ENCODE measurements at regions of chr5 and their contacts with region 1.

Region 1: DNA sequence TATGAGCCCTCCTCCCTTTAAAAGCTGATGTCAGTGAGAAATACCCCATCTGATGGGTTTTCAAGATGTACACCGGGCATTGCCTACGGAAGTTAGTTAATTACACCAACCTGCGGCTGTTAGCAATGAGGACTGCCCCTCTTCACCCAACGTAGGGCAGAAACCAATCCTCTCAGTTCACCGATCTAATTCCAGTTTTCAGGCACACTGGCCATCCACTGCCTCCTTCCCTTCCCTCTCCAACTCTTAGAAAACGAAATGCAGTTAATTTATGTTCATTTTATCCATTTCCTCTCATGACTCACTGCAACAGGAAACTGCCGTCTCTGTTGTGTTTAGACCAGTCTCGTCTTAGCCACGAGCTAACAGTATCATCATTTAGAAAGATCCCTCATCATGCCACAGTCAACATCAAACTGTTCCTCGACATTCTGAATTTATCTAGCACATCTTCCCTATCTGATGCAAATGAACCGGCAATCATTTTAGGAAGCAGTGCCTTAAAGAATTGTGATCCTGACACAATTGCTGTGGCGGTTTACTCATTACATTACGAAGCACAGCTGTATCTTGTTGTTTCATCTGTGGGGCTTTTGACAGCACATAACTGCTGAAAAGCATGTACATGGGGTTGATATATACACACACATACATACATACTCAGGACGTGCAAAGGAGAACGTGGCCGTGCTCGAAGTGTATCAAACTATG is 168.6 kb downstream of the EFNA5 start:
- DNase-seq: no peak
- H3K4me3 ChIP-seq: no peak overlapping the region
- H3K27ac ChIP-seq: no peak overlapping the region
- H3K4me1 ChIP-seq: peaks cover 21% of the 10 kb centered on the region
- CTCF ChIP-seq: no peak

Region 2: GRCh38 chr5:106801554-106801953 is 700.6 kb before region 1 on chr5:
- CTCF ChIA-PET with region 1: no interaction called
- POLR2A ChIA-PET with region 1: no interaction called
- intact Hi-C with region 1: no loop called
- DNase-seq: no peak
- H3K4me3 ChIP-seq: no peak overlapping the region
- H3K27ac ChIP-seq: no peak overlapping the region
- H3K4me1 ChIP-seq: no peaks in the 10 kb centered on the region
- CTCF ChIP-seq: no peak

Region 3: DNA sequence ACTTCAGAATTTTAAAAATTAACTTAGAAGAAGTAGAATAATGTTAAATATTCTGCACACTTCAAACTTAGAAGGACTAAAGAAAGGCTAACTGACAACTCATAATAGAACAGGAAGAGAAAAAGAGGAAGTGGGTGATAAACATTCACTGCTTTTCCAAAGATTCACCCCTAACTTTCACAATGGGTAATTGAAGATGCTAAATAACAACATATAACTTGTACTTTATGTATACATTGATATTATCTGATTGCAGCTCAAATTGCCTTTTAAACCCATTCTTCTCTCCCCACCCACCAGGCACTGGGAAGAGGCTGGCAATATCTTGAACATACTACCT is 207.9 kb before region 1 on chr5:
- CTCF ChIA-PET with region 1: no interaction called
- POLR2A ChIA-PET with region 1: interaction called, 10 read pairs
- intact Hi-C with region 1: no loop called
- DNase-seq: peak; percentile 65
- H3K4me3 ChIP-seq: peak overlapping the region; percentile 2
- H3K27ac ChIP-seq: peak overlapping the region; percentile 49
- H3K4me1 ChIP-seq: peaks cover 38% of the 10 kb centered on the region
- CTCF ChIP-seq: no peak

Region 4: DNA sequence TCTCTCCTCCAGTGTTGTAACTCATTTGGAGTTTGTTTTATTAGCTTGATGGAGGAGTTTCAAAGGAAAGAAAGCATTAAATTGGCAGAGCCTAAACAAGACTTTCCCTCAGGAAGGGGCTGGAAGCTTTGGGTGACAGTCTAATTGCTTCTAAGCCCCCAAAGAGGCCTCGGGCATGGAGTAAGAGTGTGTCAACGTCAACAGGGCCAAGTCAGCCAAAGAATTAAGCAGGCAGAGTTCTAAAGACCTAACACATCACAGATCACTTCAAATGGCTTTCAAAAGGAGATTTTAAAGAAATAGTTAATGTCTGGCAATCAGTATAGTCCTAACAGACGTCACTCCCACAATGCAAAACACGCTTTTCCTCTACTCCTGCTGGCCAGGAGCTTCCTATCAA is 65.9 kb before region 1 on chr5:
- CTCF ChIA-PET with region 1: no interaction called
- POLR2A ChIA-PET with region 1: no interaction called
- intact Hi-C with region 1: no loop called
- DNase-seq: no peak
- H3K4me3 ChIP-seq: no peak overlapping the region
- H3K27ac ChIP-seq: no peak overlapping the region
- H3K4me1 ChIP-seq: peaks cover 33% of the 10 kb centered on the region
- CTCF ChIP-seq: no peak

Region 5: DNA sequence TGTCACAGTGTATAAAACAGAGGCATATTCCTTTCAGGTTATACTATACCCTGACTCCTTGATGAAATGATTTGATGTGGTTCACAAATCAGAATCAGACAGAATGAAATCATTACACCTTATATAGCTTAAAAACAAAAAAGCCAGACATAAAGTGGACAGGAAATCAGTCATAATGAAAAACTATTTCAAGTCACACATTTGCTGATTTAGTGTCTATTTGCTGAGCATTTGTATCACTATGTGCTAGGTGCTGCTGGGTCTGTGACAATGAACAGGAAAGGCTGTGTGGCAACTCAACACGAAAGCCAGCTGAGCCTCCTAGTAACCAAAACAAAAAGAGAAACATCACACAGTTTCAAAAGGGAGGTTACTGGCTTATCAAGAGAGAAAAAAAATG is 25.3 kb before region 1 on chr5:
- CTCF ChIA-PET with region 1: no interaction called
- POLR2A ChIA-PET with region 1: interaction called, 13 read pairs
- intact Hi-C with region 1: no loop called
- DNase-seq: peak; percentile 71
- H3K4me3 ChIP-seq: no peak overlapping the region
- H3K27ac ChIP-seq: peak overlapping the region; percentile 15
- H3K4me1 ChIP-seq: peaks cover 39% of the 10 kb centered on the region
- CTCF ChIP-seq: no peak

Region 6: DNA sequence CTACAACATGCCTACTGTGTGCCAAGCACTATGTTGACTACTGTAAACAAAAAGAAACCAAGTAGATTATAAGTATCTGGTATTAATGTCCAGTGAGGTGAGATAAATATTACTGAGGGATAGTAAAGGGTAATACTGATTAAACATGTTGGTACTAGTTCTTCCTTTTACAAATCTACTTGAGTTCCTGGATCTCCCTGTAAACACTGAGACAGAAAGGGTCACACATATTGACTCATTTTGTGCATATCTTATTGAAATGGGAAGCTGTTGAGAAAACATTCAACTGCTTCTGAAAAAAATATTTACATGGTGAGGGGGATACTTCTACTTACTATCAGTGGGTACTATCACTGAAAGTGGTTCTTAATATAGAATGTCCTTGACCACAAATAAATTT is 144.3 kb after region 1 on chr5:
- CTCF ChIA-PET with region 1: no interaction called
- POLR2A ChIA-PET with region 1: no interaction called
- intact Hi-C with region 1: no loop called
- DNase-seq: no peak
- H3K4me3 ChIP-seq: no peak overlapping the region
- H3K27ac ChIP-seq: no peak overlapping the region
- H3K4me1 ChIP-seq: no peaks in the 10 kb centered on the region
- CTCF ChIP-seq: no peak

Measured in OCI-LY7 (cell line).